Right cardiac atrium (tissue), 5 donors: ENCODE measurements at regions of chr19 and their contacts with region 1.

Region 1: DNA sequence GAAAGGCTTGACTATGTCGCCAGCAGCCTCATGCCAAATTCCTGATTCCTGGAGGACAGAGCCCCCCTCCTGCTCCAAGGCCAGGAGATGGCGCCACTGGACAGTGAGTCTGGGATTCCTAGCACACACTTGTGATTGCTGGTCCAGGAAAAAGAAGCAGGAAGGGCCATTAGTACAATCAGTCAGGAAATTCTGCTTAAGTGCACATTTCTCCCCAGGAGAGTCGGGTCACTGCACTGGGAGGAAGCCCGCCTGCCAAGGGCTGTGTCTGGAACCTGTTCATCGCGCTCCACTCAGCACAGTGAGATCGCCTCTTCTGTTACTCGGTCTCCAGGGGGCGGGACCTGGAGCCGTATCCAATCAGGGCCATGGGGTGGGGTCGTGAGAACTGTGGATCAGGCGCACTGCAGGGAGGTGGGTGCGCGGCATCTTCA is 65.1 kb downstream of the ZNF823 start:
- DNase-seq: peak; percentile 80 to 90 (median 89)
- ATAC-seq: peak; percentile 95 to 98
- H3K4me3 ChIP-seq: peak overlapping the region; percentile 43
- H3K27ac ChIP-seq: no peak overlapping the region
- H3K4me1 ChIP-seq: no peaks in the 10 kb centered on the region
- H3K27me3 ChIP-seq: no peaks in the 10 kb centered on the region

Region 2: DNA sequence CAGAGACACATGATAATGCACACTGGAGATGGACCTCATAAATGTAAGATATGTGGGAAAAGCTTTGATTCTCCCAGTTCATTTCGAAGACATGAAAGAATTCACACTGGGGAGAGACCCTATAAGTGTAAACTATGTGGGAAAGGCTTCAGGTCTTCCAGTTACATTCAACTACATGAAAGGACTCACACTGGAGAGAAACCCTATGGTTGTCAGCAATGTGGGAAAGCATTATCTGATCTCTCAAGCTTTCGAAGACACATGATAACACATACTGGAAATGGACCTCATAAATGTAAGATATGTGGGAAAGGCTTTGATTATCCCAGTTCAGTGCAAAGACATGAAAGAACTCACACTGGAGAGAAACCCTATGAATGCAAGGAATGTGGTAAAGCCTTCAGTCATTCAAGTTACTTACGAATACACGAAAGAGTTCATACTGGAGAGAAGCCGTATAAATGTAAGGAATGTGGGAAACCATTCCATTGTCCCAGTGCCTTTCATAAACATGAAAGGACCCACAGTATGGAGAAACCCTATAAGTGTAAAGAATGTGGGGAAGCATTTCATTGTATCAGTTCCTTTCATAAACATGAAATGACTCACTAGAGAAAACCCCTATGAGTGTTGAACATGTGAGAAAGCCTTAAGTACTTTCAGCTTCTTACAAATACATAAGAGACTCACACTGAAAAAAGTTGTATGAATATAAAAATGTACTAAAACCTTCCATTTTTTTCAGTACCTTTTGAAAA is 107.8 kb after region 1 on chr19:
- intact Hi-C with region 1: loop called in 1 of 4 experiments (anchors 10 kb)
- DNase-seq: no peak
- ATAC-seq: no peak
- H3K4me3 ChIP-seq: peak overlapping the region; percentile 12
- H3K27ac ChIP-seq: no peak overlapping the region
- H3K4me1 ChIP-seq: no peaks in the 10 kb centered on the region
- H3K27me3 ChIP-seq: no peaks in the 10 kb centered on the region

Region 3: DNA sequence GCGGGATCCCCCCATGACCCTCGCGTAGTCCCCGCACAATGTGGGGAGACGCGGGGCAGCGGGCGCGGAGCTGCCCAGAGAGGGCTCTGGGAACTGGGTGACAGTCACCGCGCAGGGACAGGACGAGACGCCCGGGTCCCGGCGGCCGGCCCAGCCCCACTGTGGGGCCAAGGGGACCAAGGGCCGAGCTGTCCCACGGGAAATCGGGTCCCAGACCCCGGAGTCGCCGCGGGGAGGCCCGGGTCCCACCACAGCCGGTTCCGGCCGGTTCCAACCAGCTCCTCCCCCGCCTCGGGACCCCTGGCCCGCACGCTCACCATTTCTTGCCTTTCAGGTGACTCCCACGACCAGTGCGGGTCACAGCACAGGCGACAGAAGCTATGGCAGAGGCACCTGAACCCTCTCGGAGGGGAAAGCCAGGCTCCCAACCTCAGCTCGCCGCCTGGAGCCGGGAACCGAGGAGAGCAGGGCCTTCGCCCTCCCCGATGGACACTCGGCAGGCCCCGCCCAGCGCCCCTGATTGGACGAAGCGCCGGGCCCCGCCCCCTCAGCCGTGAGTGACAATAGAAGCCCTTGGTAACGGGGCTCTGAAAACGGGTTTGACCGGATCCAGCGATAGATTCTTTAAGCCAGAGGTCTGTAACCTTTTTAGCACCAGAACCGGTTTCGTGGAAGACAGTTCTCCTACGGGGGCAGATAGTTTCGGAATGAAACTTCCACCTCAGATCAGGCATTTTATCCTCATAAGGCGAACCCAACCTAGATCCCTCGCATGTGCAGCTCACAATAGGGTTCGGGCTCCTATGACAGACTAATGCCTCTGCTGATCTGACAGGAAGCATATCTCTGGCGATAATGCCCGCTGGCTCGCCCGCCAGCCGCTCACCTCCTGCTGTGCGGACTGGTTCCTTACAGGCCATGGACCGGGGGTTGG is 361.9 kb after region 1 on chr19 and contains the start of gene ZNF433:
- intact Hi-C with region 1: no loop called
- DNase-seq: peak; percentile 96 to 99 (median 98)
- ATAC-seq: peak; percentile 100
- H3K4me3 ChIP-seq: peak within 1 kb of the TSS; percentile 63
- H3K27ac ChIP-seq: peak within 1 kb of the TSS; percentile 42
- H3K4me1 ChIP-seq: peaks cover 3% of the 10 kb centered on the region
- H3K27me3 ChIP-seq: no peaks in the 10 kb centered on the region
- total RNA-seq, gene ZNF433: 3.5 to 5.0 (median 3.9) TPM